ENCODE measurements at regions of chr1 and their contacts with region 1.

Region 1: DNA sequence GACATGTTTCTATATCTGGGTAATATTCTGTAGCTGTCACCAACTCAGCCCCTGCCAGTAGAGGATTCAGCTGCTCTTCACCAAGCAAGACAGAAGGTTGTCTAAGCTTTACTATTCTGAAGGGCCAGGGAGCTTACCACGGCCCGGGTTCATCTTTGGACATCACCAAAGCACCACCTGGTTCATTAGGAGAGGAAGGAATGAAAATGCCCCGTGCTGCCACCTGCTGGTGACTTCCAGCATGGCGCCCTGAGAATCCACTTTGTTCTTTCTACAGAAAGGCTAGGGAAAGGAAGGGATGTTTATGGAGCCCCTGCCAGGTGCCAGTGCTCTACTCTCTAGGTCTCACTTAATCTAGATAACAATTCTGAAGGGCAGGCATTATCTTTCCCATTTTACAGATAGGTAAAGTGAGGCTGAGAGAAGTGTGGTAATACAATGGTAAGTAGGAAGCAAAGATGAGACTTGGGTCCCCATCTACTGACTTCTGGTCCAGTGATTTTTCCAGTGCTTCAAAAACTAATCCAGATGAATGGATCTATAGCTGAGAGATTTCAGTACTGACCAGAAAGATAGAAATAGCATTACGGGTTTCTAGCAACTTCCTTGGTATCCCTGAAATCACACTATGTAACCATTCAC is 79.5 kb downstream of the BEND5 start:
- DNase-seq: peak; percentile 75
- H3K4me3 Mint-ChIP-seq: no peak overlapping the region
- H3K27ac Mint-ChIP-seq: no peak overlapping the region
- H3K4me1 Mint-ChIP-seq: no peaks in the 10 kb centered on the region
- H3K27me3 Mint-ChIP-seq: peaks cover 14% of the 10 kb centered on the region

Region 2: GRCh38 chr1:47906009-47906432 is 791.2 kb before region 1 on chr1:
- CTCF ChIA-PET with region 1: no interaction called
- intact Hi-C with region 1: no loop called
- DNase-seq: no peak
- H3K4me3 Mint-ChIP-seq: no peak overlapping the region
- H3K27ac Mint-ChIP-seq: no peak overlapping the region
- H3K4me1 Mint-ChIP-seq: no peaks in the 10 kb centered on the region
- H3K27me3 Mint-ChIP-seq: peaks cover 8% of the 10 kb centered on the region

Region 3: DNA sequence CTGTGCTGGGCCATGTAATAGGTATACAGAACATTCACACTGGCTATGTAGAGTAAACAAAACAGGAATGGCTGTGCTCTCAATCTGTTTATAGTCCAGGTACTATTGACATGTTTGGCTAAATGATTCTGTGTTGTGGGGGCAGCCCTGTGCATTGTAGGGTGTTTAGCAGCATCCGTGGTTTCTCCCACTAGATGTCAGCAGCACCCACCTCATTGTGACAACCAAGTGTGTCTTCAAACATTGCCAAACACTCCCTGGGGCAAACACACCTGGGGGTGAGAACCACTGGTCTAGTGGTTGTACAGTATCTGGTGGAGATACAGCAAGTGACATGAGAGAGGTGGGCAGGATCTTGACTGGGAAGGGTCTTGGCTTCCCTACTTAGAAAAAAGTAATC is 144.8 kb before region 1 on chr1:
- CTCF ChIA-PET with region 1: no interaction called
- intact Hi-C with region 1: loop called (anchors 1 kb)
- DNase-seq: peak; percentile 20
- H3K4me3 Mint-ChIP-seq: no peak overlapping the region
- H3K27ac Mint-ChIP-seq: no peak overlapping the region
- H3K4me1 Mint-ChIP-seq: no peaks in the 10 kb centered on the region
- H3K27me3 Mint-ChIP-seq: no peaks in the 10 kb centered on the region

Region 4: GRCh38 chr1:48572646-48573261 is 124.4 kb before region 1 on chr1:
- CTCF ChIA-PET with region 1: no interaction called
- intact Hi-C with region 1: loop called (anchors 1 kb)
- DNase-seq: peak; percentile 38
- H3K4me3 Mint-ChIP-seq: no peak overlapping the region
- H3K27ac Mint-ChIP-seq: no peak overlapping the region
- H3K4me1 Mint-ChIP-seq: no peaks in the 10 kb centered on the region
- H3K27me3 Mint-ChIP-seq: peaks cover 14% of the 10 kb centered on the region

Measured in activated naive CD4-positive, alpha-beta T cell treated with anti-CD3 and anti-CD28 coated beads for 36 hours (primary cell).